ENCODE measurements at regions of chr5 and their contacts with region 1.

Region 1: GRCh38 chr5:38441453-38442246 is 114.8 kb downstream of the LIFR start:
- DNase-seq: peak; percentile 88
- ATAC-seq: peak; percentile 98

Region 2: GRCh38 chr5:38515646-38516045 is 74.0 kb after region 1 on chr5:
- intact Hi-C with region 1: loop called (anchors 10 kb)
- DNase-seq: no peak
- ATAC-seq: peak; percentile 66

Region 3: DNA sequence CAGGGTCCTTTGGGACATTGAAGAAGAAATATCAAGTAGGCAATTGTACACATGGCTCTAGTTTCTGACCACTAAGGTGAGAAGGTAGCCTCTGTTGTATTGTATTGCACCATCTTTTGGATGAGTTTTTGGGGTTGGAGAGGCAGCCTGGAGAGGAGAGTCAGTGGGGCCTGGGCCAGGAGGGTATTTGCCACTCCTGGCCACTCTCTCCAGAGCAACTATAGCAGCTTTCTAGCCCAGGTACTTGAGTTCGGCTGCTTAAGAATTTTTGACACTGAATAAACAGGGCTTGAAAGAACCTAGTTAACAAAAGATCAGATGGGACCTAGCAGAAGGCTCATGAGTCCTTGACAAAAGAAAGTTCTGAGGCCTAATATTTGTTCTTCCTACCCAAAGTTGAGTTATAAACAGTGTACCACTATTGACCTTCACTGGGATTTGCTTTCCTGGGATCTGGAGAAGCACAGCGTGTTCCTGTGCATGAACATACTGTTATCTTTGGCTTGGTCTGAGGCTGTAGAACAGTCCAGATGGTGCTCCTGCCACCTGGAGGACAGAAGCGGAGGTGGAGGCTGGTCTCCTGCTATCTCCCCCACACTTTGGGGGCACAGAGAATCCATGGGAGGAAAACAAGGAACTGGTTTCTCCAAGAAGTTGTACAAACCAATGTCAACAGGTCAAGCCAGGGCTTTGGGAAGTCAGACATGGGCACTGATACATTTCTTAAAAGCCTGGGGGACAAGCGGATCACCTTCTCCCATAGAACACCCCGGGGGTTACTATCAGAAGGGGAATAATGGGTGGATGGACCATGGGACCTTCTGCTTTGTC is 225.2 kb after region 1 on chr5:
- intact Hi-C with region 1: loop called (anchors 2 kb)
- DNase-seq: peak; percentile 50
- ATAC-seq: peak; percentile 88

Measured in Right ventricle myocardium superior (tissue), 1 donor.